ENCODE measurements at regions of chr1 and their contacts with region 1.

Region 1: GRCh38 chr1:16078925-16079656 is 5.6 kb upstream of the FAM131C start:
- DNase-seq: peak; percentile 89

Region 2: DNA sequence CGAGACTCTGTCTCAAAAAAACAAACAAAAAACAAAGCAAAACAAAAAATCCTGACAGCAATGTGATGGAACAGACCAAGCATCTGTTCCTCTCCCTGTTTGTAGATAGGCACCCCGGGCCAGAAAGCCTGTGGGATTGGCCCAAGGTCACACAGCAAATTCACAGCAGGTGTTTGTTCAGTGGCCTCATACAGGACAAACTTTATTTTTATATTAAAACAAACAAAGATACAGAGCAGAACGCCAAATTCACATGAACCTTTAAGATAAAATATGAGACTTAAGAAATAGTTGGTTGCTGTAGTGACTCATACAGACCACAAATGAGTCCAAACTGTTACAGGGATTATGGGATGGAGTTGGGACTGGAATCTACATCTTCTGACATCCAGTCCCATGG is 624.8 kb before region 1 on chr1:
- in situ Hi-C with region 1: no loop called
- DNase-seq: no peak

Region 3: GRCh38 chr1:16189921-16190621 is 111.0 kb after region 1 on chr1:
- in situ Hi-C with region 1: loop called (anchors 5 kb)
- DNase-seq: no peak